ENCODE measurements at regions of chr5 and their contacts with region 1.

Region 1: GRCh38 chr5:139513852-139514485 is 31.4 kb upstream of the STING1 start:
- DNase-seq: no peak
- ATAC-seq: peak; percentile 1

Region 2: GRCh38 chr5:139422307-139422893 is 91.6 kb before region 1 on chr5:
- intact Hi-C with region 1: loop called (anchors 2 kb)
- DNase-seq: no peak
- ATAC-seq: no peak

Region 3: DNA sequence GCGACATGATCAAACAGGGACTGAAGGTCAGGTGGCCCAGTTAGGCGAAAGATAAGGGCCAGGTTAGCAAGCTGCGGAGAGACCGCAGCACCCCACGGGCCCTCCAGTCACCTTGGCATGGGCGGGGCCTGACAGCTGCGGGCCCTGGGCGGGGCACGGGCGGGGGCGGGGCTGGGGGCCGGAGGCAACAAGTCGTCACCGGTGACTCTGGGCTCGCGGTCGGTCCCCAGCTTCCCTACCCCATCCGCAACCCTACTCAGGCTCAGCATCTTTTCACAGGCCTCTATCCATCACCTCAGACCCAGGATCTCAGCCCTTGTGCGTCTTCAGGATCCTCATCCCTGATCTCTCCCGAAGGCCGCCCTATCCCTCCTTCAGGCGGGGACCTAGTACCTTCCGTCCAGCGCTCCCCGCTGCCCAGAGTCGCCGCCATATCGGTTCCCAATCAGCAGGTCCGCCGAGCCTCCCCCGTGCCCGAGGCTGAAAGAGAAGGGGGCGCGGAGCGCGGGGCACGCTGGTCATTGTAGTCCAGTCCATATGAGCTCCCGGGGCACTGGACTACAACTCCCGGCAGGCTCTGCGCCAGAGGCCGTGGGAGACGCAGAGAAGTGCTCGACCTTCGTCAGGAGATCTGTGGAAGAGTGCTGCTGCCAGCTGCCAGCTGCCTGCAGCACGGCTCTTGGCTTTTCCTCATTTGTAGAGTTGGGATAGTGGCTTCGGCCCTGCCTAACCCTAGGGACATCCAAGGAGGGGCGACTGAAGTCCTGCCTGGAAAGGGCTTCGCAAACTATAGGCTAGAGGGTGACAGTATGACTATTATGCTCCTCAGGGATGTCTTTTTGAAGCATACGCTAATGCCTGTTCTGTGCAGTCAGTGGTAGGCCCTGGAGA is 74.7 kb before region 1 on chr5 and contains the start of gene DNAJC18:
- intact Hi-C with region 1: loop called (anchors 5 kb)
- DNase-seq: peak; percentile 98
- ATAC-seq: peak; percentile 99
- total RNA-seq, gene DNAJC18: 10.5 TPM

Region 4: GRCh38 chr5:139474890-139475791 is 38.8 kb before region 1 on chr5:
- intact Hi-C with region 1: no loop called
- DNase-seq: no peak
- ATAC-seq: peak; percentile 55